ENCODE measurements at regions of chr6 and their contacts with region 1.

Region 1: GRCh38 chr6:28134015-28134414 is 7.7 kb upstream of the ZKSCAN8 start:
- DNase-seq: peak in 1 of 4 donors; percentile 35
- ATAC-seq: no peak
- H3K4me3 ChIP-seq: no peak overlapping the region
- H3K27ac ChIP-seq: peak overlapping the region in 1 of 2 donors; percentile 26
- H3K4me1 ChIP-seq: peaks cover 0 to 35% of the 10 kb centered on the region in 2 donors
- H3K27me3 ChIP-seq: no peaks in the 10 kb centered on the region
- CTCF ChIP-seq: no peak

Region 2: DNA sequence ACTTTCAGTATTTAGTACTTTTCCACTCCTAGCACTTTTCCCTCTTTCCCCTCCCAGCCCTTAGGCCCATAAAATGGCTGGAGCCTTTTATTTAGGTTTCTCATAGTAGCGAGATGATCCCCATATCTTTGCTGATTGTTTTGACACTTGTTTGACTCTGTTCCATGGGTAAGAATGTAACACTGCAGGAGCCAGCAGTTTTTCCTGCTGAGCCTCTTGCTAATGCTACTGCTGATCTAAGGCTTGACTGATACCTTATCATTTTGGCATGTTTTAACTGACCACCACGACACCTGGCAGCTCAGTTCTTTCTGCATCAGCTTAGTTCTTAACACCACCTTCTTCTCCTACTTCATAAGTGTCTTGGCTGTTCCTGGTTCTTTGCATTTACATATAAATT is 37.3 kb after region 1 on chr6:
- intact Hi-C with region 1: no loop called
- DNase-seq: no peak
- ATAC-seq: no peak
- H3K4me3 ChIP-seq: no peak overlapping the region
- H3K27ac ChIP-seq: no peak overlapping the region
- H3K4me1 ChIP-seq: no peaks in the 10 kb centered on the region
- H3K27me3 ChIP-seq: peaks cover 0 to 6% of the 10 kb centered on the region in 2 donors
- CTCF ChIP-seq: no peak

Region 3: GRCh38 chr6:28355743-28356665 is 222.0 kb after region 1 on chr6:
- intact Hi-C with region 1: loop called in 1 of 2 experiments (anchors 5 kb)
- DNase-seq: peak; percentile 75 to 92 (median 82)
- ATAC-seq: peak; percentile 94
- H3K4me3 ChIP-seq: peak overlapping the region; percentile 50
- H3K27ac ChIP-seq: peak overlapping the region; percentile 77 to 86
- H3K4me1 ChIP-seq: peaks cover 6 to 34% of the 10 kb centered on the region in 2 donors
- H3K27me3 ChIP-seq: no peaks in the 10 kb centered on the region
- CTCF ChIP-seq: peak; percentile 71 to 74

Measured in left lung (tissue), 14 donors.